ENCODE measurements at regions of chr12 and their contacts with region 1.

Region 1: GRCh38 chr12:52050761-52051541 is at the start of gene NR4A1:
- DNase-seq: peak; percentile 99 to 100
- ATAC-seq: peak; percentile 83 to 96 (median 88)
- H3K4me3 ChIP-seq: peak within 1 kb of the TSS; percentile 64
- H3K4me3 Mint-ChIP-seq: peak within 1 kb of the TSS; percentile 96
- H3K27ac ChIP-seq: peak within 1 kb of the TSS; percentile 91
- H3K27ac Mint-ChIP-seq: peak within 1 kb of the TSS; percentile 95 to 97
- H3K4me1 ChIP-seq: peaks cover 34% of the 10 kb centered on the region
- H3K4me1 Mint-ChIP-seq: peaks cover 31 to 36% of the 10 kb centered on the region in 2 donors
- H3K27me3 ChIP-seq: no peaks in the 10 kb centered on the region
- H3K27me3 Mint-ChIP-seq: peaks cover 0 to 7% of the 10 kb centered on the region in 2 donors
- CTCF ChIP-seq: no peak
- total RNA-seq, gene NR4A1: 72.5 to 177 (median 96.7) TPM

Region 2: DNA sequence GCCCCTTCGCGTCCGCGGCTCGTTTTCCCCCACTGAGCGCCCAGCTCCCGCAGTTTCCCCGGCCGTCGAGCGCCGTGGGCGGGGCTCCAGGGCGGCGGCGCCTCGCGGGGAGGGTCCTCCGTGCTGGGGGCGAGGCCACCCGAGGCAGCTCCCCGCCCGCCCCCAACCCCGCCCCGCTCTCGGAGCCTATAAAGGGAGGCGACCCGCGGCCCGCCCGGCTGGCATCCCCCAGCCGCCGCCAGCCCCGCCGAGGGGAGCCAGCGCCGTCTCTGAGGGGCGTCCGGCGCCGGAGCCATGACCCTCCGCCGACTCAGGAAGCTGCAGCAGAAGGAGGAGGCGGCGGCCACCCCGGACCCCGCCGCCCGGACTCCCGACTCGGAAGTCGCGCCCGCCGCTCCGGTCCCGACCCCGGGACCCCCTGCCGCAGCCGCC is 44.2 kb before region 1 on chr12 and contains the start of gene TAMALIN:
- intact Hi-C with region 1: loop called (anchors 1 kb)
- DNase-seq: peak; percentile 79 to 92
- ATAC-seq: peak; percentile 58 to 75 (median 60)
- H3K4me3 ChIP-seq: peak within 1 kb of the TSS; percentile 69
- H3K4me3 Mint-ChIP-seq: peak within 1 kb of the TSS; percentile 93
- H3K27ac ChIP-seq: peak within 1 kb of the TSS; percentile 61
- H3K27ac Mint-ChIP-seq: peak within 1 kb of the TSS; percentile 90 to 95
- H3K4me1 ChIP-seq: peaks cover 31% of the 10 kb centered on the region
- H3K4me1 Mint-ChIP-seq: peaks cover 27 to 34% of the 10 kb centered on the region in 2 donors
- H3K27me3 ChIP-seq: peaks cover 4% of the 10 kb centered on the region
- H3K27me3 Mint-ChIP-seq: no peaks in the 10 kb centered on the region
- CTCF ChIP-seq: no peak
- total RNA-seq, gene TAMALIN: 403 to 663 (median 424) TPM

Region 3: GRCh38 chr12:52036587-52037171 is 14.3 kb before region 1 on chr12:
- intact Hi-C with region 1: loop called (anchors 1 kb)
- DNase-seq: peak; percentile 87 to 94
- ATAC-seq: peak; percentile 59 to 76 (median 67)
- H3K4me3 ChIP-seq: peak overlapping the region; percentile 32
- H3K4me3 Mint-ChIP-seq: peak overlapping the region; percentile 60
- H3K27ac ChIP-seq: peak overlapping the region; percentile 53
- H3K27ac Mint-ChIP-seq: peak overlapping the region; percentile 77 to 87
- H3K4me1 ChIP-seq: peaks cover 43% of the 10 kb centered on the region
- H3K4me1 Mint-ChIP-seq: peaks cover 7 to 23% of the 10 kb centered on the region in 2 donors
- H3K27me3 ChIP-seq: peaks cover 3% of the 10 kb centered on the region
- H3K27me3 Mint-ChIP-seq: peaks cover 0 to 11% of the 10 kb centered on the region in 2 donors
- CTCF ChIP-seq: no peak

Region 4: DNA sequence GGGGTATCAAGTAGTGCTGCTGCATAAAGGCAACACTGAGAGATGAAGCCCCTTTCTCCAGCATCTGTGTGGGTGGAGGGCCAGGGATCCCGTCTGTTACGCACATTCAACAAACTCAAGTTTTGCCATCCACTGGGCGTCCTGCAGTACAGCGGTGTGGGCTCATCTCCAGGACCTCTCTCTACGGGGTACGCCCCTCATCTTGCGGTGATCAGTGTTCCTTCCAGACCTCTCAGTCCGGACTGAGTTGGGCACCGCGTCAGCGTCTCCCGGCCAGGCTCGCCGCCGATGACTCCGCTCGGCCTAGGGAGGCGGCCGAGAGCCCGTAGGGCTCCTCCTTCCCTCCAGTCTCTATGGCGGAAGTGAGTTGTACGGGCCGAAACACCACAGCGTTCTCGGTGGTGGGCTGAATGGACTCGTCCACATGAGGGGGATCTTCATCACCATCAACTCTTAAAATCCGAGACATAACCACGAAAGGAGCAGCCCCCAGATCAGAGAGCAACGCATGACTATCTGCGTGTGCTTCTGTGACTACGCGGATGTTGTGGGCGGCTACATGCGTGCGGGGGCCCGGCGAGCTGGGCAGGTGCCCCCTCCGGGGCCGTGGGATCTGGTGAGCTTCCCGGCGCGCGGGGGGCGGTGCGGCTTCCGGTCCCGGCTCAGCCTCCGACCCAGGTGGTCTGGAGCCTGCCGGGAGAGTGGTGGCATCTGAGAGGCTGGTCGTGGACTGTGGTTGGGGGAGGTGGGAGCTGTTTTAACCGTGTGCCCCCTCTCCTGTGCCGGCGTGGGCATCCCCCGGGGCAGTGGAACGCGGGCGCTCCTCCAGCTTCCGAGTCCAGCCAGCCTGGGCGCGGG is 18.6 kb after region 1 on chr12 and contains the start of gene ATG101:
- intact Hi-C with region 1: loop called (anchors 1 kb)
- DNase-seq: peak; percentile 84 to 95
- ATAC-seq: peak; percentile 93 to 99 (median 94)
- H3K4me3 ChIP-seq: peak within 1 kb of the TSS; percentile 95
- H3K4me3 Mint-ChIP-seq: peak within 1 kb of the TSS; percentile 96
- H3K27ac ChIP-seq: peak within 1 kb of the TSS; percentile 88
- H3K27ac Mint-ChIP-seq: peak within 1 kb of the TSS; percentile 95 to 98
- H3K4me1 ChIP-seq: peaks cover 34% of the 10 kb centered on the region
- H3K4me1 Mint-ChIP-seq: peaks cover 42 to 48% of the 10 kb centered on the region in 2 donors
- H3K27me3 ChIP-seq: no peaks in the 10 kb centered on the region
- H3K27me3 Mint-ChIP-seq: peaks cover 0 to 13% of the 10 kb centered on the region in 2 donors
- CTCF ChIP-seq: peak; percentile 63
- total RNA-seq, gene ATG101: 18.6 to 32.8 (median 23.3) TPM

Region 5: GRCh38 chr12:52097045-52097666 is 46.2 kb after region 1 on chr12:
- intact Hi-C with region 1: no loop called
- DNase-seq: no peak
- ATAC-seq: peak in 2 of 3 donors; percentile 38 to 41
- H3K4me3 ChIP-seq: no peak overlapping the region
- H3K4me3 Mint-ChIP-seq: no peak overlapping the region
- H3K27ac ChIP-seq: no peak overlapping the region
- H3K27ac Mint-ChIP-seq: no peak overlapping the region
- H3K4me1 ChIP-seq: no peaks in the 10 kb centered on the region
- H3K4me1 Mint-ChIP-seq: no peaks in the 10 kb centered on the region
- H3K27me3 ChIP-seq: no peaks in the 10 kb centered on the region
- H3K27me3 Mint-ChIP-seq: peaks cover 24 to 44% of the 10 kb centered on the region in 2 donors
- CTCF ChIP-seq: no peak